Gastrocnemius medialis (tissue), 4 donors: ENCODE measurements at regions of chr22 and their contacts with region 1.

Region 1: GRCh38 chr22:49800408-49801238 is 27.1 kb downstream of the BRD1 start:
- DNase-seq: no peak
- ATAC-seq: peak in 1 of 2 donors; percentile 55
- H3K4me3 ChIP-seq: no peak overlapping the region
- H3K27ac ChIP-seq: no peak overlapping the region
- H3K4me1 ChIP-seq: peaks cover 12 to 36% of the 10 kb centered on the region in 2 donors
- H3K27me3 ChIP-seq: no peaks in the 10 kb centered on the region
- CTCF ChIP-seq: no peak
- POLR2A ChIP-seq: no peak

Region 2: GRCh38 chr22:49827853-49828598 is 27.4 kb after region 1 on chr22 and contains the start of gene BRD1:
- in situ Hi-C with region 1: no loop called
- intact Hi-C with region 1: loop called (anchors 2 kb)
- DNase-seq: peak in 1 of 2 donors; percentile 42
- ATAC-seq: peak; percentile 68 to 69
- H3K4me3 ChIP-seq: peak within 1 kb of the TSS; percentile 62 to 70 (median 65)
- H3K27ac ChIP-seq: peak within 1 kb of the TSS; percentile 75 to 90 (median 82)
- H3K4me1 ChIP-seq: peaks cover 19 to 27% of the 10 kb centered on the region in 2 donors
- H3K27me3 ChIP-seq: no peaks in the 10 kb centered on the region
- CTCF ChIP-seq: no peak
- POLR2A ChIP-seq: peak; percentile 20 to 21
- total RNA-seq, gene BRD1: 15.6 to 25.2 (median 18.1) TPM

Region 3: DNA sequence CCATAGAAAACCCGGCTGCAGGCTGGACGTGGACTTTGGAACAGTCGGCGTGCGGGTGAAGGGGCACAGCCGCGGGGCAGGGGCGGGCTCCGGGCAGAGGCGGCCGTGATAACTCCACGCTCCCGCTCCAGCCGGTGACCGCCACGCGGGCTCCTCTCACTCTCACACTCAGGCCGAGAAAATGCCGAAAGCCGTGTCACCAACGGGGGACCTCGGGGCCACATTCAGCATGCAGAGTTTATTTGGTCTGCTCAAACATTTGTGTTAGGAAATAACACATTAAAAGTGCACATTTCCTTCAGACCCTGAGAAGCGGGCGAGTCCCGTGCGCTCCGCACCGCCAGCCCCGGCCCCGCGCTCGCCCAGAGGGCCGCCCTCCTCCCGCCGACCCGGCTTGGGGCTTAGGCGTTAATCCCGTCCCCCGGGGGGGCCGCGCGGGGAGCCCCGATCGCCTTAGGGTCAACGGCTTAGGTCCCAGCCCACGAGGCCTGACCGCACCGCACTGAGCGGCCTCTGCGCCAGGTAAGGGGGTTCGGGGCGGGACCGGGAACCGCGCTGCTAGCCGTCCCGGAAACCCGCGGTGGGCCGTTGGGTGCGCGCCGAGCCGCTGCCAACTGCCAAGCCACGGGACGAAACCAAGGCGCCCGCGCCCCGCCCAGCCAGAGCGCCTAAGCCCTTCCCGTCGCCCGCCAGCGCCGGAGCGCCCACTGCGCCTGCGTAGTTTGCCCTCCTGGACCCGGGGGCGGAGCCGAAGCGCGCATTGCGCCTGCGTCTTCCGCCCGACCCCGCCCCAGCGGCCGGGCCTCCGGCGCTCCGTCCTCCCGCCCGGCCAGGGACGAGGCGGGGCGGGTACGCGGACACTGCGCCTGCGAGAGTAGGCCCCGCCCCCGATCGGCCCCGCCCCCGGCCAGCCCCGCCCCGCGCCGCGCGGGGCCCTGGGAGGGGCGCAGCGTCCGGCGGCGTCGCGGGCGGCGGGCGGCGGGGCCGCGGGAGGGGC is 52.6 kb after region 1 on chr22 and contains the start of gene ZBED4:
- in situ Hi-C with region 1: no loop called
- intact Hi-C with region 1: no loop called
- DNase-seq: peak; percentile 91 to 96
- ATAC-seq: peak; percentile 88 to 90
- H3K4me3 ChIP-seq: peak within 1 kb of the TSS; percentile 66 to 82 (median 73)
- H3K27ac ChIP-seq: peak within 1 kb of the TSS; percentile 83 to 92 (median 86)
- H3K4me1 ChIP-seq: peaks cover 25 to 35% of the 10 kb centered on the region in 2 donors
- H3K27me3 ChIP-seq: peaks cover 26 to 27% (median 26%) of the 10 kb centered on the region in 3 donors
- CTCF ChIP-seq: no peak
- POLR2A ChIP-seq: peak; percentile 74 to 82
- total RNA-seq, gene ZBED4: 6.7 to 8.4 (median 7.5) TPM